Endothelial cell of umbilical vein (primary cell): ENCODE measurements at regions of chr1 and their contacts with region 1.

Region 1: DNA sequence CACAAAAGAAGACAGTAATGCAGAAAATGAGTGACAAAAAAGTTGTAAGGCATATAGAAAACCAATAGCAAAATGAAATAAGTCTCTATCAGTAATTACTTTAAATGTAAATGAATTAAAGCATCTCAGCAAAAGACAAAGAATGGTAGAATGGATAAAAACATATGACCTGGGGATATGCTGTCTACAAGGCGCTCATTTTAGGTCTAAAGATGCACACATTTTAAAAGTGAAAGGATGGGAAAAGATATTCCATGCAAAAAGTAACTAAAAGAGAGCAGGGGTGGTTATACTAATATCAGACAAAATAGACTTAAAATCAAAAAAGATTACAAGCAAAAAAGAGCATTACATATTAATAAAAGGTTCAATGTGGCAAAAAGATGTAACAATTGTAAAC is 41.2 kb downstream of the SPATA6 start:
- DNase-seq: no peak
- H3K4me3 ChIP-seq: no peak overlapping the region
- H3K27ac ChIP-seq: no peak overlapping the region
- H3K4me1 ChIP-seq: peaks cover 7% of the 10 kb centered on the region
- H3K27me3 ChIP-seq: no peaks in the 10 kb centered on the region
- CTCF ChIP-seq: no peak
- POLR2A ChIP-seq: no peak

Region 2: DNA sequence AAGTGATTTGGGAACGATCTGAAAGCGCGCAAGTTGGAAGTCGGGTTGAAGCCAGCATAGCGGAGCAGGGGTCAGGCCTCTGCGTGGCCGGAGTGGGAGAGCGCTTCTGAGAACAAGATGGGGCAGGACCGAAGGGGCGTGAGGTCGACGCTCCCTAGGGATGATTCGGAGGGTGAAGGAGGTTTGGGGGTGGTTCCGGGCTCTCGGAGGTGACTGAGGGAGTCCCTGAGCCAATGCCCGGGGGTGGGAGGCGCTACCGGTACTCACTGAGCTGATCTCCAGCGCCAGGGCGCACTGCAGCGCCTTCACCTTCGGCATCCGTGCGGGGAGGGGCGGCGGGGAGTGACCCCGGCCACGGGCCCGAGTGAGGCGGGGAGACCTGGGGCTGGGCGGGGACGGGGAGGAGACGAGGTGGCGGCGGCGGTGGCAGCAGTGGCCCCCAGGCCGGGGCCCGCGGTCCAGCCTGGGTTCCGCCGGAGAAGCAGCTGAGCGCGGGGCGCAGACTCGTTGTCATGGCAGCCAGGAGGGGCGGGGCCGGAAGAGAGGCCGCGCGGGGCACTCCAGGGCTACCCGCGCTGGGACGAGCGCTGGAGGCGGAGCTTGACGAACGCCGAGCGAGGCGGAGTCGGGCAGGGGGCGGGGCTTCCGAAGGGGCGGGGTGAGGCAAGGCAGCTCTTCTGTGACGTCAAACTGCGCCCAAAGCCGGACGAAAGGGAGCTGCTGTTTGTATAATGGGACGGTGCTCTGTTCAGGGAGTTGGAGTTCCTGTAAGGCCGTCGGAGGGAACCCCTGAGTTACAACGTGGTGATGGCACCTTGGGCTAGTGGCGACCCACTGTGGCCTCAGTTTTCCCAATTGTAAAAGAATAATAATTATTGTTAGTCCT is 41.1 kb after region 1 on chr1 and contains the start of gene SPATA6:
- CTCF ChIA-PET with region 1: no interaction called
- POLR2A ChIA-PET with region 1: no interaction called
- dilution Hi-C with region 1: no loop called
- intact Hi-C with region 1: loop called (anchors 2 kb)
- DNase-seq: peak; percentile 89
- H3K4me3 ChIP-seq: peak within 1 kb of the TSS; percentile 52 to 81 (median 78)
- H3K27ac ChIP-seq: peak within 1 kb of the TSS; percentile 44
- H3K4me1 ChIP-seq: peaks cover 29% of the 10 kb centered on the region
- H3K27me3 ChIP-seq: peaks cover 0 to 1% of the 10 kb centered on the region in 2 experiments
- CTCF ChIP-seq: no peak
- POLR2A ChIP-seq: peak; percentile 66
- total RNA-seq, gene SPATA6: 4.9 and 10.5 TPM in 2 replicates